ENCODE measurements at regions of chr7 and their contacts with region 1.

Region 1: DNA sequence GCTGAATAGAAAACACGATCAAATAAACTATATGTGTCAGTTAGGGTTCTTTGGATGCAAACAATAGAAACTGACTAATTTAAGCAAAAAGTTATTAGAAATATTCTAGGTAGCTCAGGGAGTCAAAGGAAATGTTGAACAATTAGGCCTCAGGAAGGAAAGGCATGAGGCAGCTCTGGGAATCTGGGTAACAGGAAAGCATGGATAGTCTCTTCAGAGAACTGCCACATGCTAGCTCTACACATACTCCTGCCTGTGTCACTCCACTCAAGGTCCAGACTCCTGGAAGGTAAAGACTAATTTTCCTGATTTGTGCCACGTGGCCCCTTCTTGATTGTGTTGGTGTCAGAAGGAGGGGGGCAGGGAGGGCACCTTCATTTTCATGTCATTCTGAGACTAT is 23.8 kb upstream of the PTTG1IP2 start:
- DNase-seq: no peak
- H3K4me3 ChIP-seq: no peak overlapping the region
- H3K27ac ChIP-seq: no peak overlapping the region
- H3K4me1 ChIP-seq: no peaks in the 10 kb centered on the region
- H3K27me3 ChIP-seq: no peaks in the 10 kb centered on the region
- CTCF ChIP-seq: no peak

Region 2: DNA sequence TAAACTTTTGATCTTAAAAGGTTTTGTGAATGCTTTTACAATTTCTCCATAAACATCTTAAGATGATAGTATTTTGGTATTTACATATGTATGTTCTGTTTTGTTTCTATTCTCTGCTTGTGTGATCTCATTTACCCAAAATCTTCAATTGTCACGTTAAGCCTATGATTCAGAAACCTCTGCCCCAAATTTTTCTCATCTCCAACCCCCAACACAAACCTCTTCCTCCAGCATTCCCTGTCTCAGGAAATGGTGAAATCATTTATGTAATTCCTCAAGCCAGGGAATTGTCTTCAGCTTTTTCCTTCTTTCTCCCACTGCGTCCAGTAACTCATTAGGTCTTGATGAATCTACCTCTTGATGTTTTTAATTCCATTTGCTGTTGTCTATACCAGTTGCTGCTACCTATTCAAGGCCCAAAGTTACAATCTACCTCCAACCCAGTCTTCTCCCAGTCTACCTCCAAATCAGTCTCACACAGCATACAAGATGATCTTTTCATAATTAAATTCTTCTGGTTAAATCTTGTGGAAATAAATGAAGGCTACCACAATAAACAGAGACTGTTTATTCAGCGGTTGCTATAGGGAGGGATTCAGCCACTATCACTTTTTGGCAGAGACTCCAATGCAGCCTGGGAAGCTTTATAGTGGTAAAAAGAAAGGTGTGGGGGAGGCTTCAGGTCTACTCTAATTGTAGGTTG is 194.9 kb before region 1 on chr7:
- CTCF ChIA-PET with region 1: no interaction called
- POLR2A ChIA-PET with region 1: interaction called, 10 read pairs
- intact Hi-C with region 1: no loop called
- DNase-seq: peak in 1 of 2 experiments; percentile 79
- H3K4me3 ChIP-seq: peak overlapping the region; percentile 34
- H3K27ac ChIP-seq: peak overlapping the region; percentile 84
- H3K4me1 ChIP-seq: peaks cover 41% of the 10 kb centered on the region
- H3K27me3 ChIP-seq: no peaks in the 10 kb centered on the region
- CTCF ChIP-seq: no peak

Region 3: DNA sequence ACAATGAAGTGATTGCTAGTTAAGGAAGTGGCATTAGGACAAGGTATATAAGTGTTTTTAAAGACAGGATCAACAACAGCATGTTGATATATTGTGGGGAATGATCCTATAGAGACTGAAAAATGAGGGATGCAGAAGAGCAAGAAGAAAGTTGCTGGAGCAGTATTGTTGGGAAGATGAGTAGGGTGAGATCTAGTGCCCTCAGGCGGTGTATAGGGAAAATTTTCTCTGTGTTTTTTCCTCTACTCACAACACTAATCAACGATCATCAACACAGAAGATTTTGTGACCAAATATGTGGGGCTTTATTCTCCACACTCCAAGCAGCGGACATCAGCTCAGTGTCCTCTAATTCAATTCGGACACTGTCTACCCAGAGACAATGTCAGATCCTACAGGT is 14.3 kb after region 1 on chr7:
- CTCF ChIA-PET with region 1: no interaction called
- POLR2A ChIA-PET with region 1: no interaction called
- intact Hi-C with region 1: no loop called
- DNase-seq: no peak
- H3K4me3 ChIP-seq: no peak overlapping the region
- H3K27ac ChIP-seq: no peak overlapping the region
- H3K4me1 ChIP-seq: no peaks in the 10 kb centered on the region
- H3K27me3 ChIP-seq: no peaks in the 10 kb centered on the region
- CTCF ChIP-seq: no peak